ENCODE measurements at regions of chr11 and their contacts with region 1.

Region 1: GRCh38 chr11:28858076-28858475 is 749.9 kb downstream of the METTL15 start:
- DNase-seq: no peak
- H3K4me3 ChIP-seq: no peak overlapping the region
- H3K27ac ChIP-seq: no peak overlapping the region
- H3K4me1 ChIP-seq: no peaks in the 10 kb centered on the region
- H3K27me3 ChIP-seq: no peaks in the 10 kb centered on the region
- CTCF ChIP-seq: no peak

Region 2: DNA sequence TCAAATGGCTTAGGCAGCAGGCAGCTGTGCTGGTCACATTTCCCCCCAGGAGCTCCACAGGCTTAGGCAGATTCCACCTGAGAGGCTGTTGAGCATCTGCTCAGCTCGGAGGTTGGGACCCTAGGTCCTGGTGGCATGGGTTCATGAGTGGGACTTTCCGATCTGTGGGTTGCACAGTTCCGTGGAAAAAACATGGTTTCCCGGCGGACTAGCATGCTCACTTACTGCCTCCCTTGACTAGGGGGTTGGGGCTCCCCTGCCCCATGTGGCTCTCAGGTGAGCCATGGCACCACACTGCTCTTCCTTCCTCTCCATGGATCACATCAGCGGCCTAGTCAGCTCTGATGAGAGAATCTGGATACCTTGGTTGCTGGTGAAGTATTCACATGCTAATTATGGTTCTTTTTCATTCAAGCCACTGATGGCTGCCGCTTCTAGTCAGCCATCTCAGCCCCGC is 64.8 kb before region 1 on chr11:
- intact Hi-C with region 1: loop called (anchors 10 kb)
- DNase-seq: no peak
- H3K4me3 ChIP-seq: no peak overlapping the region
- H3K27ac ChIP-seq: no peak overlapping the region
- H3K4me1 ChIP-seq: no peaks in the 10 kb centered on the region
- H3K27me3 ChIP-seq: no peaks in the 10 kb centered on the region
- CTCF ChIP-seq: no peak

Region 3: GRCh38 chr11:28938091-28938490 is 80.0 kb after region 1 on chr11:
- intact Hi-C with region 1: no loop called
- DNase-seq: no peak
- H3K4me3 ChIP-seq: no peak overlapping the region
- H3K27ac ChIP-seq: no peak overlapping the region
- H3K4me1 ChIP-seq: no peaks in the 10 kb centered on the region
- H3K27me3 ChIP-seq: no peaks in the 10 kb centered on the region
- CTCF ChIP-seq: no peak

Region 4: DNA sequence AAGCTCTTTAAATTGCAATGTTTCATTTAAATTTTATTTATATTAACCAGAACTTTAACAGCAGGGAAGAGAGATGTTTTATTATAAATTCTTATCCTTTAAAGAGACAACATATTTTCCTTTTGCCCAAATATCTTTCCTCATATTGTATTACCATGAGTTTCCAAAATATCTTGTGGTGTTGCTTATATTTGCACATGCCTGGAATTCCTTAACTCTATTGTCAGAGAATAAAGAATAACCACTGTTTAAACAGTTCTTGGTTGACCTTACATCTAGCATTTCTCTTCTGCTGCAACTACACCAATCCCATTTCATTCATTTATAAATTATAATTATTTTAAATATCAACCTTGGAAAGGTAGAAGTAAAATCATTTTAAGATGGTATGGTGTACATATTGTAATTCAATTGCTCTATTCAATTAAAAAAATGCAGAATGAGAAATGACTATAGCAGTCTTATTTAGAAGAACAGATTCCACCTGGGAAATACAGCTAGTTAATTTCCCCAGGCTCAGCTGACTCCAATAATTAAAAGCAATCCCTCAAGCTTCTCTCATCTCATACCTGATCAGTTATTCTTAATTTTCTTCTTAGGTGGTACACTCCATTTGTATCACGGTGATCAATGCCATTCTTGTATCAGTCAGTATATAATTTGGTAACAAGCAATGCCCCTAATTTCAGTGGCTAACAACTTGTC is 235.5 kb after region 1 on chr11:
- intact Hi-C with region 1: no loop called
- DNase-seq: no peak
- H3K4me3 ChIP-seq: no peak overlapping the region
- H3K27ac ChIP-seq: no peak overlapping the region
- H3K4me1 ChIP-seq: no peaks in the 10 kb centered on the region
- H3K27me3 ChIP-seq: no peaks in the 10 kb centered on the region
- CTCF ChIP-seq: no peak